Mammary epithelial cell (primary cell): ENCODE measurements at regions of chr15 and their contacts with region 1.

Region 1: GRCh38 chr15:66740802-66741201 is 38.8 kb downstream of the SMAD6 start:
- DNase-seq: no peak
- H3K4me3 ChIP-seq: no peak overlapping the region
- H3K27ac ChIP-seq: no peak overlapping the region
- H3K4me1 ChIP-seq: no peaks in the 10 kb centered on the region
- H3K27me3 ChIP-seq: no peaks in the 10 kb centered on the region
- CTCF ChIP-seq: no peak

Region 2: DNA sequence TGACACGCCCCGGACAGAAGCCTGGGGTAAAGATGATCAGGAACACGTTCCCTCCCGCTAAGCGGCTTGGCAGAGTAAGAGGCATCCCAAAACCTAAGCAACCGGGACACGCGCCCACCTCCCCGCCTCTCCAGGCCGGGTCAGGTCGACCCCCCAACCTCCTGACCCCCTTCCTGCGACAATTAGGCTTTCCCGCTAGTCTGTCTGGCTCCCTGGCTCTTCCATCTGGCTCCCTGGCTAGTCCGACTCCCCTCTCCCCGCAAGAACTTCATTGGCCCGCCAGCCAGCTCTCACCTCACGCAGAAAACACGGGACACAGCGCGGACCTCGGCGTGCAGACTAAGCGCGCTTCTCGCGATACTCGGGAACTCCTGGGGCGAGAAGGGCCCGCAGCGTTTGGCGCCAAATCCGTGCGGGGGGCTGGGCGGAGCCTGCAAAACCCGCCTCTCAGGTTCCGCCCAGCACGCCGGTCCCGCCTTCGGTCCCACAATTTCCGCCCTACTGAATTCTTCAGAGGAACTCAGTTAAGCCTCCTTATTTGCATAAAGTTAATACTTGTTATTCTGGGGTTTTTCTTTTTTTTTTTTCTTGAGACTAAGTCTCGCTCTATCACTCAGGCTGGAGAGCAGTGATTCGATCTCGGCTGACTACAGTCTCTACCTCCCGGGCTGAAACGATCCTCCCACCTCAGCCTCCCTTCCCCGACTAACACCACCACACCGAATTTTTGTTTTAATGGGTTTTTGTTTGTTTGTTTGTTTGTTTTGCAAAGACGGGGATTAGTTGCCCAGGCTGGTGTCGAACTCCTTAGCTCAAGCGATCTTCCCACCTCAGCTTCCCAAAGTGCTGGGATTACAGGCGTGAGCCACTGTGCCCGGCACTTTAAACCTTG is 384.2 kb before region 1 on chr15 and contains the start of gene TIPIN:
- CTCF ChIA-PET with region 1: no interaction called
- dilution Hi-C with region 1: no loop called
- in situ Hi-C with region 1: no loop called
- intact Hi-C with region 1: no loop called
- DNase-seq: peak; percentile 92
- H3K4me3 ChIP-seq: peak within 1 kb of the TSS; percentile 62 to 82 (median 63)
- H3K27ac ChIP-seq: peak within 1 kb of the TSS; percentile 78
- H3K4me1 ChIP-seq: peaks cover 9% of the 10 kb centered on the region
- H3K27me3 ChIP-seq: no peaks in the 10 kb centered on the region
- CTCF ChIP-seq: no peak
- total RNA-seq, gene TIPIN: 7.7 to 18.1 TPM

Region 3: GRCh38 chr15:66789029-66790025 is 48.5 kb after region 1 on chr15:
- CTCF ChIA-PET with region 1: no interaction called
- dilution Hi-C with region 1: loop called (anchors 5 kb)
- in situ Hi-C with region 1: no loop called
- intact Hi-C with region 1: no loop called
- DNase-seq: no peak
- H3K4me3 ChIP-seq: no peak overlapping the region
- H3K27ac ChIP-seq: no peak overlapping the region
- H3K4me1 ChIP-seq: no peaks in the 10 kb centered on the region
- H3K27me3 ChIP-seq: no peaks in the 10 kb centered on the region
- CTCF ChIP-seq: peak; percentile 50 to 63